ENCODE measurements at regions of chr18 and their contacts with region 1.

Region 1: GRCh38 chr18:44803019-44803650 is 122.4 kb downstream of the SETBP1 start:
- DNase-seq: peak; percentile 62 to 87
- H3K4me3 ChIP-seq: no peak overlapping the region
- H3K27ac ChIP-seq: peak overlapping the region; percentile 82 to 96
- H3K4me1 ChIP-seq: no peaks in the 10 kb centered on the region
- H3K27me3 ChIP-seq: no peaks in the 10 kb centered on the region
- CTCF ChIP-seq: no peak
- POLR2A ChIP-seq: peak in 1 of 2 donors; percentile 49

Region 2: GRCh38 chr18:44680266-44681075 is 122.7 kb before region 1 on chr18 and contains the start of gene SETBP1:
- intact Hi-C with region 1: loop called (anchors 5 kb)
- DNase-seq: peak; percentile 80 to 87
- H3K4me3 ChIP-seq: peak within 1 kb of the TSS; percentile 73 to 77
- H3K27ac ChIP-seq: peak within 1 kb of the TSS; percentile 95 to 99
- H3K4me1 ChIP-seq: peaks cover 0 to 6% of the 10 kb centered on the region in 2 donors
- H3K27me3 ChIP-seq: no peaks in the 10 kb centered on the region
- CTCF ChIP-seq: peak in 2 of 4 experiments; percentile 16 to 39
- POLR2A ChIP-seq: no peak
- total RNA-seq, gene SETBP1: 16.8 to 74.0 (median 36.9) TPM